GM10248 (cell line): ENCODE measurements at regions of chr4 and their contacts with region 1.

Region 1: GRCh38 chr4:177473991-177474390 is 31.8 kb upstream of the AGA start:
- DNase-seq: no peak
- CTCF ChIP-seq: no peak

Region 2: DNA sequence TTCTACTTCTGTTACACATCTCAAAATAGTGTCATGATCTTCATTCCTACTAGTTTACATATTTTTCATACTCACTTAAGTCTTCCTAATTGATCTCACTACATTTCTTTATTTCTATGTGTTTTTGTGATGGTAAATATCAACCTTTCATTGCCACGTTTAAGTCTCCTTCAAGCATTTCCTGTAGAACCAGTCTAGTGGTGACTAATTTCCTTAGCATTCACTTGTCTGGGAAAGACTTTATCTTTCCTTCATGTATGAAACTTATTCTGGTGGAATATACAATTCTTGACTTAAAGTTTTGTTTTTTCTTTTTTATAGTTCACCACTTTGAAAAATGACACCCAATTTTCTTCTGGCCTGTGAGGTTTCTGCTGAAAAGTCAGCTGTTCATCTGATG is 345.7 kb before region 1 on chr4:
- CTCF ChIA-PET with region 1: no interaction called
- POLR2A ChIA-PET with region 1: no interaction called
- DNase-seq: no peak
- CTCF ChIP-seq: no peak

Region 3: DNA sequence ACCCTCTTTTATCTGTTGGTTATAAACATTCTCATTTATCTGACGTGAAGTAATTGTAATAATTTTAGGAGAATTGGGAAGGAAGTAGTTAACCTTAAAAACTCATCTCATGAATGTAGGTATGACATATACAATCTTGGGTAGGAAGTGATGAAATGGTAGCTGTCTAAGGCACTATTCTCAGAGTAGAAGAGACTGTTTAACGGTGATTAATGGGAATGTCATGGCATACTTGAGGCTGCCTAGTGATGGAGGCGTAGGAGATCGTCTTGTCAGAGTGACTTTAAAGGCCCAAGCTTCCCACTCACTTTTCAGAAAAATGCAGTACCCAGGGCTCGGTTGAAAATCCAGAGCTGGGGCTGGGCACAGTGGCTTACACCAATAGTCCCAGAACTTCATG is 12.4 kb before region 1 on chr4:
- CTCF ChIA-PET with region 1: interaction called, 19 read pairs
- POLR2A ChIA-PET with region 1: no interaction called
- DNase-seq: no peak
- CTCF ChIP-seq: no peak

Region 4: GRCh38 chr4:177484613-177485021 is 10.6 kb after region 1 on chr4:
- CTCF ChIA-PET with region 1: interaction called, 10 read pairs
- POLR2A ChIA-PET with region 1: no interaction called
- DNase-seq: no peak
- CTCF ChIP-seq: no peak